ENCODE measurements at regions of chr19 and their contacts with region 1.

Region 1: DNA sequence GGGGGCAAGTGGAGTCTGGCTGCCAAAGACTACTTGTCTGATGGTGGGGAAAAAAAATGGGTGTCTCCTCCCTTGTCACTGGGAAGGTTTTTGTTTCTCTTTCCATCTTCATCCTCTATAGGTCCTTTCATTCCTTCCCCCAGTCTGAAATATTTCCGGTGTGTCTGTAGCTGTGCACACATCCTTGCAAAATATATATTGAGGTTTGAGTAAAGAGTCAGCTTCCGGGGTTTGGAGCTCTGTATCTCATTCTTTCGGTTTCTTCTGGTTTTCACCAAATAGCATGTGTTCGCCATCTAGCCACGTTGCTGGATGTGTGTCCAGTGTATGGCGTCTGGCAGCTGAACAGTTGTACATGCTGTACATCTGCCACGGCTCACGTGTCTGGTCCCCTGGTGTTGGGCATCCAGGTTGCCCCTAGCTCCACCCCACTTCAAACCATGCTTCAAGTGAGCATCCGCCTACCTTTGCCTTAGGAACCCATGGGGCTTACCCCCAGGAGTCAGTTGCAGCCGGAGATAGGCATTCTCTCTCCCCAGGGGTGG is 142.2 kb downstream of the SIPA1L3 start:
- DNase-seq: peak; percentile 93
- ATAC-seq: peak; percentile 54
- H3K4me3 ChIP-seq: peak overlapping the region; percentile 57
- H3K27ac ChIP-seq: peak overlapping the region; percentile 99
- H3K4me1 ChIP-seq: peaks cover 54% of the 10 kb centered on the region
- H3K27me3 ChIP-seq: no peaks in the 10 kb centered on the region
- CTCF ChIP-seq: peak in 1 of 3 experiments; percentile 6; a peak in 1 of 6 replicates
- EP300 ChIP-seq: peak; percentile 21 to 26; a peak in 1 of 4 replicates
- POLR2A ChIP-seq: peak; percentile 86
- RAD21 ChIP-seq: 0 out of 2 replicates have a peak, but pooled peaks have one; percentile 10

Region 2: DNA sequence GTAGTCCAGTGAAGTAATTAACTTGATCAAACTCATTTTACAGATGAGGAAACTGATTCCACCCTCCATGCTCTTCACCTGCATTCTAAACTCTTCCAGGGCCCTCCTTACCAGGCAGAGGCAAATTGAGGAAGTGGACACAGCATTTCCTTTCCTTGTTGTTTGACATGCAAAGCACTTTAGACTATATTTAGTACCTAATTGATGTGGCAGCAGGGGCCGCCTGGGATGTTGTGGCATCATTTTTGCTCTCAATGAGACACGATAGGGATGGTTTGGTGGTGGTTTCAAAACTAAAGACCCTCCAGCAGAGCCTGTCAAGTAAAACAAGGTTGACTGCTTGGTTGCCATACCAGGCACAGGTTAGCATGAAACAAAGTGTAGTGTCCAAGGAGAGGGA is 134.3 kb before region 1 on chr19:
- CTCF ChIA-PET with region 1: interaction called, 7 read pairs
- POLR2A ChIA-PET with region 1: interaction called, 6 read pairs
- RAD21 ChIA-PET with region 1: interaction called, 19 read pairs
- SMC1A ChIA-PET with region 1: interaction called, 7 read pairs
- in situ Hi-C with region 1: loop called (anchors 5 kb)
- intact Hi-C with region 1: no loop called
- DNase-seq: peak; percentile 77
- ATAC-seq: peak; percentile 70
- H3K4me3 ChIP-seq: peak overlapping the region; percentile 77
- H3K27ac ChIP-seq: peak overlapping the region; percentile 87
- H3K4me1 ChIP-seq: peaks cover 42% of the 10 kb centered on the region
- H3K27me3 ChIP-seq: no peaks in the 10 kb centered on the region
- CTCF ChIP-seq: no peak
- EP300 ChIP-seq: peak in 1 of 2 experiments; percentile 67; a peak in 2 of 4 replicates
- POLR2A ChIP-seq: peak; percentile 44; the same call in 1 of the 2 replicates
- RAD21 ChIP-seq: no peak

Region 3: GRCh38 chr19:37963190-37963936 is 85.8 kb before region 1 on chr19:
- CTCF ChIA-PET with region 1: interaction called, 3 read pairs
- POLR2A ChIA-PET with region 1: interaction called, 4 read pairs
- RAD21 ChIA-PET with region 1: interaction called, 31 read pairs
- SMC1A ChIA-PET with region 1: interaction called, 17 read pairs
- in situ Hi-C with region 1: no loop called
- intact Hi-C with region 1: loop called (anchors 5 kb)
- DNase-seq: no peak
- ATAC-seq: peak; percentile 59
- H3K4me3 ChIP-seq: no peak overlapping the region
- H3K27ac ChIP-seq: peak overlapping the region; percentile 45
- H3K4me1 ChIP-seq: peaks cover 45% of the 10 kb centered on the region
- H3K27me3 ChIP-seq: no peaks in the 10 kb centered on the region
- CTCF ChIP-seq: peak in 1 of 3 experiments; percentile 9; a peak in 1 of 6 replicates
- EP300 ChIP-seq: no peak
- POLR2A ChIP-seq: no peak
- RAD21 ChIP-seq: no peak

Region 4: GRCh38 chr19:37987356-37988332 is 61.5 kb before region 1 on chr19:
- CTCF ChIA-PET with region 1: interaction called, 19 read pairs
- POLR2A ChIA-PET with region 1: interaction called, 4 read pairs
- RAD21 ChIA-PET with region 1: interaction called, 18 read pairs
- SMC1A ChIA-PET with region 1: interaction called, 9 read pairs
- in situ Hi-C with region 1: no loop called
- intact Hi-C with region 1: no loop called
- DNase-seq: no peak
- ATAC-seq: peak; percentile 77
- H3K4me3 ChIP-seq: no peak overlapping the region
- H3K27ac ChIP-seq: peak overlapping the region; percentile 86
- H3K4me1 ChIP-seq: peaks cover 34% of the 10 kb centered on the region
- H3K27me3 ChIP-seq: no peaks in the 10 kb centered on the region
- CTCF ChIP-seq: peak; percentile 26 to 58 (median 39); a peak in 4 of 6 replicates
- EP300 ChIP-seq: no peak
- POLR2A ChIP-seq: no peak
- RAD21 ChIP-seq: peak; percentile 54

Region 5: GRCh38 chr19:38033658-38034498 is 15.3 kb before region 1 on chr19:
- CTCF ChIA-PET with region 1: interaction called, 14 read pairs
- POLR2A ChIA-PET with region 1: interaction called, 10 read pairs
- RAD21 ChIA-PET with region 1: interaction called, 55 read pairs
- SMC1A ChIA-PET with region 1: interaction called, 74 read pairs
- in situ Hi-C with region 1: no loop called
- intact Hi-C with region 1: no loop called
- DNase-seq: peak; percentile 81
- ATAC-seq: peak; percentile 94
- H3K4me3 ChIP-seq: peak overlapping the region; percentile 11
- H3K27ac ChIP-seq: peak overlapping the region; percentile 69
- H3K4me1 ChIP-seq: peaks cover 39% of the 10 kb centered on the region
- H3K27me3 ChIP-seq: no peaks in the 10 kb centered on the region
- CTCF ChIP-seq: peak; percentile 21 to 51 (median 44); a peak in 4 of 6 replicates
- EP300 ChIP-seq: peak; percentile 40 to 59; a peak in 2 of 4 replicates
- POLR2A ChIP-seq: no peak
- RAD21 ChIP-seq: peak; percentile 35; the same call in 1 of the 2 replicates

Region 6: DNA sequence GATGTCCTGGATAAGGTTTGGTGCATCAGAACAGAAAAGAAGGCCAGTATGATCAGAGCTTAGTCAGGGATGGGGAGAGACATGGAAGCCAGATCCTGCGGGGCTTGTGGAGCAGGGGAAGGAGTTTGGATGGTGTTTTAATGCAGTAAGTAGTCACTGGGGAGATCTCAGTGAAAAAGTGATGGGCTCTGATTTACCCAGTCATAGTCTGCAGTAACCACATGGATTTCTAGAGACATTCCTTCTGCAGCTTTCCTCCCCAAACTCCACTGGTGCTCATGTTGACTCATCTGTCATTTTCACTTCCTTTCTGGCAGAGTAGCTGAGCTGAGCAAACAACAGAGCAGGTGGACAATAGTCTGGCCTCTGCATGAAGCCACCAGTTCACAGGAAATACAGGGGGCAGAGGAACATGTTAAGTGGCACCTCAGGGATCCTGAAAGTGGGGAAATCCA is 30.8 kb after region 1 on chr19:
- CTCF ChIA-PET with region 1: no interaction called
- POLR2A ChIA-PET with region 1: interaction called, 3 read pairs
- RAD21 ChIA-PET with region 1: interaction called, 14 read pairs
- SMC1A ChIA-PET with region 1: interaction called, 3 read pairs
- in situ Hi-C with region 1: no loop called
- intact Hi-C with region 1: loop called (anchors 2 kb)
- DNase-seq: peak; percentile 77
- ATAC-seq: peak; percentile 98
- H3K4me3 ChIP-seq: no peak overlapping the region
- H3K27ac ChIP-seq: peak overlapping the region; percentile 13; the same call in 1 of the 2 replicates
- H3K4me1 ChIP-seq: peaks cover 16% of the 10 kb centered on the region
- H3K27me3 ChIP-seq: no peaks in the 10 kb centered on the region
- CTCF ChIP-seq: no peak
- EP300 ChIP-seq: peak in 1 of 2 experiments; percentile 84; a peak in 2 of 4 replicates
- POLR2A ChIP-seq: no peak
- RAD21 ChIP-seq: no peak